ENCODE measurements at regions of chr9 and their contacts with region 1.

Region 1: GRCh38 chr9:107637421-107638420 is 148.2 kb upstream of the KLF4 start:
- DNase-seq: peak; percentile 90 to 93
- ATAC-seq: peak; percentile 89 to 93 (median 92)
- H3K4me3 ChIP-seq: peak overlapping the region; percentile 65
- H3K27ac ChIP-seq: peak overlapping the region; percentile 96
- H3K4me1 ChIP-seq: peaks cover 17% of the 10 kb centered on the region
- H3K27me3 ChIP-seq: no peaks in the 10 kb centered on the region
- CTCF ChIP-seq: peak; percentile 32

Region 2: GRCh38 chr9:107309271-107309670 is 328.4 kb before region 1 on chr9:
- intact Hi-C with region 1: no loop called
- DNase-seq: no peak
- ATAC-seq: no peak
- H3K4me3 ChIP-seq: no peak overlapping the region
- H3K27ac ChIP-seq: no peak overlapping the region
- H3K4me1 ChIP-seq: peaks cover 30% of the 10 kb centered on the region
- H3K27me3 ChIP-seq: no peaks in the 10 kb centered on the region
- CTCF ChIP-seq: no peak

Region 3: DNA sequence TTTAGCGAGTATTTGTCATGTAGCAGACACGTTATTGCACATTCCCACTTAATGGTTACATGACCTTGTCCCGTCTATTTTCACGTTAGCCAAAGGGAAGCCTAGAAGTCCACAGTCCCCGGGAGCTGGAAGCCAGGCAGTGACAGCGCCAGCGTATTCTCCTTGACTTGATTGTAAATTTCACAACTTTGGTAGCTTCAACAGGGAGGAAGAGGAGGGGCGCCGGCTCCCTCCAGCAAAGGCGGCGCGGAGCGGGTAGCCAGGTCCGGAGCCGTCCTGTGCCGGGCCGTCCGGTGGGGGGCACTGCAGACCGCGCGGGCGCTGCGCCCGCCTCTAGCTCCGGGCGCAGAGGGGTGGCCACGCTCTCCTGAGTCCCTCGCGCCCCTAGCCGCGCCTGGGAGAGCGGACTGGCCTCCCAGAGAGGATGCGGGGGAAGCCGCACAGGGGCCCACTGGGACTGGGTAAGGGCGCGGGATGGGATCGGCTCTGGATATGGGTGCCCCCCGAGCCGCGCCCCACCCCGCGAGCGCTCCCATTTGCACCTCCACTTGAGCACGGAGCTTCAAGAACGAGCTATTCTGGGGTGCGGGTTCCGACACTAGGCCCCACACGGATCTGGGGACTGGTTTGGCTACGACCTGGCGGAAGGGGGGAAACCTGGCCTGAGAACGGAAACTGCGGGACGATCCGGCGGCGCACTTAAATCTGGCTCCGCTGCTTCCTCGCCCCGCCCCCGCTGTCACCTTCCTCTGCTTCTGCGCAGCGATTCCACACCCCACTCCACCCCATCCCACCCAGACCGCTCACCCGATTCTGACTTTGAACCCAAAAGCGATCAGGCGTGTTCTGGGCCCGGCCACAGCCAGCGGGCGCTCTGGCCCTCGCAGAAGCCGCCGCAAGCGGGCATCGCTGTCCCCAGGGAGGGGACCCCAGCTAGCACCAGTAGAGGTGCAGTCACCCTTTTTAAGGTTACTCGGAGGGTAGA is 172.0 kb before region 1 on chr9:
- intact Hi-C with region 1: no loop called
- DNase-seq: peak; percentile 81 to 88
- ATAC-seq: peak; percentile 97 to 100 (median 99)
- H3K4me3 ChIP-seq: peak overlapping the region; percentile 75
- H3K27ac ChIP-seq: no peak overlapping the region
- H3K4me1 ChIP-seq: peaks cover 5% of the 10 kb centered on the region
- H3K27me3 ChIP-seq: peaks cover 0 to 7% (median 0%) of the 10 kb centered on the region in 3 donors
- CTCF ChIP-seq: peak; percentile 91

Region 4: GRCh38 chr9:107732781-107733522 is 95.2 kb after region 1 on chr9:
- intact Hi-C with region 1: loop called in 1 of 2 experiments (anchors 5 kb)
- DNase-seq: peak; percentile 57 to 74
- ATAC-seq: peak; percentile 69 to 82 (median 70)
- H3K4me3 ChIP-seq: peak overlapping the region; percentile 40
- H3K27ac ChIP-seq: peak overlapping the region; percentile 76
- H3K4me1 ChIP-seq: peaks cover 26% of the 10 kb centered on the region
- H3K27me3 ChIP-seq: no peaks in the 10 kb centered on the region
- CTCF ChIP-seq: no peak

Region 5: DNA sequence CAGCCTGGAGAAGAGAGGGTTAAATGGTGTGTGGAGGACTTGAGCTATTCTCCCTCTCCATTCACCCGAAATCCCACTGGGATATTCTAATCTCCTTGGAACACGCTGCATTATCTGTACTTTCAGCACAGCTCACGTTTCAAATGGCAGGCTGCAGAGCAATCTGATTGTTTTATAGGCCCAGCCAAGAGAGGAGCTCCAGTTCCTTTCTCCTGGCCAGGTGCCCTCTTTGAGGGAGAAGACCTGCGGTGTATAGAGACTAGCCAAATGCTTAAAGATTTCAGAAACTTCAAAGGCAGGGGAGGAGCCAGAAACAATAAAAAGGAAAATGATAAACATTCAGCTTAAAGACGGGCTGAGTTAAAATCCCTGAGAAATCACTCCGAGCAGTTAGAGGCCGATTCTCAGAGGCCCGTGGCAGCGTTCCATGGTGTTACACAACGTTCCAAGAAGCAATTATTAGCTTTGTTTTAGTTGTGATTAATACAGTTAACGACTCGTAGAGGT is 415.9 kb after region 1 on chr9:
- intact Hi-C with region 1: loop called in 1 of 2 experiments (anchors 10 kb)
- DNase-seq: peak; percentile 72 to 78
- ATAC-seq: peak; percentile 59 to 83 (median 66)
- H3K4me3 ChIP-seq: peak overlapping the region; percentile 43
- H3K27ac ChIP-seq: peak overlapping the region; percentile 48
- H3K4me1 ChIP-seq: peaks cover 42% of the 10 kb centered on the region
- H3K27me3 ChIP-seq: no peaks in the 10 kb centered on the region
- CTCF ChIP-seq: no peak

Measured in psoas muscle (tissue), 8 donors.